ENCODE measurements at regions of chr6 and their contacts with region 1.

Region 1: GRCh38 chr6:44237813-44238433 is 9.0 kb upstream of the HSP90AB1 start:
- DNase-seq: peak; percentile 77 to 87
- ATAC-seq: peak; percentile 76 to 87 (median 81)
- H3K4me3 ChIP-seq: peak overlapping the region; percentile 49 to 71 (median 62)
- H3K27ac ChIP-seq: peak overlapping the region; percentile 91 to 98 (median 94)
- H3K4me1 ChIP-seq: peaks cover 21 to 57% (median 49%) of the 10 kb centered on the region in 9 donors
- H3K27me3 ChIP-seq: no peaks in the 10 kb centered on the region
- CTCF ChIP-seq: peak; percentile 97 to 99 (median 98)

Region 2: DNA sequence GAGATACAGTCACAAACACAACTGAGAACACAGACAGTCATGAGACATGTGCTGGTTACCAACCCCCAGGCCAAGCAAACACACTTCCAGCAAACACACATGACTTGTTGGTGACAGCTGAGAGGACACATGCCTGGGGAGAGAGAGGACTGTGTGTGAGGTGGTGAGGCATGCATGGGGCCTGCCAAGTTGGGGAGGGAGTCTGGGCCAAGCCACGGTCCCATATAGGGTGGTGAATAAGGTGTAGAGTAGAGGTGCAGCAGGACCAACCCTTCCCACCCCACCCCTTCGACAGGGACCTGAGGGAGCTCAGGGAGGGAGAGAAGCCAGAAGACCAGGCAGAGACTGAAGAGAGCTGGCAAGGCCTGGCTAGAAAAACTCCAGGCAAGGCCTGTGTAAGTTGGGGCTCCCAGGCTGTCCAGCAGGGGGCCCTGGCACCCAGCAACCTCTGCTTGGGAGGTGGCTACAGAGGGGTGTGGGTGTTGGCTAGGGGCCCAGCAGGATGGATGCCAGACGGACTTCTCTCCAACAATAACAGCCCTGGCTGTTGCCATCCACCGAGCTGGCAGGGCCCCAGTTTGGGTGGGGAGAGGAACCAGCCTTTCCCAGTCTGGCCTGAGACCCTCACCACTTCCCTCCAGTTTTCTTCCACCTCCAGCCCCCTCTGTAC is 16.5 kb before region 1 on chr6:
- intact Hi-C with region 1: loop called in 2 of 10 experiments (anchors 1 to 2 kb)
- DNase-seq: peak; percentile 92 to 94
- ATAC-seq: peak; percentile 35 to 80 (median 68)
- H3K4me3 ChIP-seq: peak overlapping the region in 5 of 10 donors; percentile 72 to 87 (median 75)
- H3K27ac ChIP-seq: peak overlapping the region; percentile 82 to 98 (median 94)
- H3K4me1 ChIP-seq: peaks cover 40 to 97% (median 92%) of the 10 kb centered on the region in 9 donors
- H3K27me3 ChIP-seq: no peaks in the 10 kb centered on the region
- CTCF ChIP-seq: peak; percentile 61 to 93 (median 80)

Region 3: DNA sequence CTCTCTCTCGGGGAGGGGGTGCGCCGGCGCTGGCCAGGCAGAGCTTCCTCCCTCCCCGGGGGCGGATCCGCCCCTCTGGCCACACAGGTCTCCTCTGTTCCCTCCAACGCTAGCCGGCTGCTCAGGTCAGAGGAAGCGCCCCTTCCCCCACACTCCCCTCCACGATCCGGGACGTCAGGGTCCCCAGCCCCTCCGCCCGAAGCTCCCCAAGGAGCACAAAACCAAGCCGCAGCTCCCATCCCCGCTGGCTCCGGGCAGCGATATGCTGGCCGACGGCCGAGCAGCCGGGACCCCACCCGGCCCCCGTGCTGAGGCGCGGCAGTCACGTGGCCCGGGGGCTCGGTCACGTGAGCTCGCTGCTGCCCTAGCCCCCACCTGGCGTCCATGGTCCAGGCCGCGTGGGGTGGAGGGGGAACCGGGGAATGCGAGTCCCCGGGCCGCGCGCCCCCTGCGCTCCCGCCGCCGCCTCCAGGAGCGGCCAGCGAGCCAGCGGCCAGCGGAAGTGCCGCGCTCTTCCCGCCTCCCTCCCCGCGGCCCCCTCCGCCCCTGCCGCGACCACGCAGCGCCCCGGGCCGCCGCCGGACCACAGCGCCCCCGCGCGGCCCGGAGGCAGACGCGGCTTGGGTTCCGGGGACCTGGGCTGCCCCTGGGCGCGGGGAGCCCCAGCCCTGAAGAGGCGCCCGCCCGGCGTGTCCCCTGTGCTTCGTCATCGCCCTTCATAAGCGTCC is 19.3 kb after region 1 on chr6 and contains the start of gene SLC35B2:
- intact Hi-C with region 1: loop called in 1 of 10 experiments (anchors 1 kb)
- DNase-seq: peak; percentile 68 to 70
- ATAC-seq: peak; percentile 66 to 89 (median 76)
- H3K4me3 ChIP-seq: peak within 1 kb of the TSS; percentile 80 to 100 (median 98)
- H3K27ac ChIP-seq: peak within 1 kb of the TSS; percentile 87 to 98 (median 96)
- H3K4me1 ChIP-seq: peaks cover 11 to 58% (median 22%) of the 10 kb centered on the region in 9 donors
- H3K27me3 ChIP-seq: no peaks in the 10 kb centered on the region
- CTCF ChIP-seq: peak; percentile 55 to 94 (median 80)
- total RNA-seq, gene SLC35B2: 19.4 to 29.8 (median 23.7) TPM

Region 4: DNA sequence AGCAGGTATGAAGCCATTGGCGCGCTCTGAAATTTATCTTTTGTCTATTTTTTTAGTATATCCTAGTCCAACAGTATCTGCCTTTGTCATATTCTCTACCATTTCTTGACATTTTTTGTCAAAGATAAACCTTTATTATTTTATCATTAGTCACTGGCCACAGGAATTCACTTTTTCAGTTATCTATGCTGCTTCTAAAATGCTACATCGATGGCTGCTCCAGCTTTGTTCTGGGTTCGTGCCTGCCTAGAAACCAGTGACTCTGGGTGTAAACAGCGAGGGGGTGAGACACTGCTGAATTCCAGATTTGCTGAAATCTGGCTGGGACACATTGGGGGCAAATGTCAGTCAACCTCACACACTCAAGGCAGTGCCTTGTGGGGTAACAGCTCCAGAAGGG is 343.0 kb after region 1 on chr6:
- intact Hi-C with region 1: no loop called
- DNase-seq: no peak
- ATAC-seq: no peak
- H3K4me3 ChIP-seq: no peak overlapping the region
- H3K27ac ChIP-seq: no peak overlapping the region
- H3K4me1 ChIP-seq: no peaks in the 10 kb centered on the region
- H3K27me3 ChIP-seq: no peaks in the 10 kb centered on the region
- CTCF ChIP-seq: no peak